ENCODE measurements at regions of chr3 and their contacts with region 1.

Region 1: DNA sequence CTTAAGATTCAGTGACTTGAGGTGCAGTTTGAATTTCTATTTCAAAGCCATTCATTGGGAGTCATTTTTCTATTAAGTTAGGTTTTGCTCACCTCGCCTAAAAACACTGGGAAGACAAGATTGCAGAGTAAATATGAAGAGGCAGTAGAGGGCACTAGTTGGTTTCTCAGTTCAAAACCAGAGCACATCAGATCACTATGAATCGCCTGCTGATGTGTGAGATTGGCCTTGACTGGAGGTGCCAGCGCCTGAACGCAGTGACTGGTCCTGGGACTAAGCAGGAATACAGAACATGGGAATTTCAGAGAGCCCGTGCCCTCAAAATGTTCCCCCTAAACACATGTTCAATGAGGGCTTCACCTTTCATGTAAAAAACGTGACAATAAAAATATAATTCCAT is 229.0 kb downstream of the ITPR1 start:
- DNase-seq: peak; percentile 23
- H3K4me3 Mint-ChIP-seq: no peak overlapping the region
- H3K27ac Mint-ChIP-seq: peak overlapping the region; percentile 63
- H3K4me1 Mint-ChIP-seq: peaks cover 53% of the 10 kb centered on the region
- H3K27me3 Mint-ChIP-seq: no peaks in the 10 kb centered on the region

Region 2: GRCh38 chr3:4334548-4334947 is 387.6 kb before region 1 on chr3:
- intact Hi-C with region 1: no loop called
- DNase-seq: no peak
- H3K4me3 Mint-ChIP-seq: no peak overlapping the region
- H3K27ac Mint-ChIP-seq: no peak overlapping the region
- H3K4me1 Mint-ChIP-seq: no peaks in the 10 kb centered on the region
- H3K27me3 Mint-ChIP-seq: peaks cover 5% of the 10 kb centered on the region

Region 3: GRCh38 chr3:4741404-4742307 is 19.6 kb after region 1 on chr3:
- intact Hi-C with region 1: loop called (anchors 2 kb)
- DNase-seq: no peak
- H3K4me3 Mint-ChIP-seq: no peak overlapping the region
- H3K27ac Mint-ChIP-seq: peak overlapping the region; percentile 87
- H3K4me1 Mint-ChIP-seq: peaks cover 67% of the 10 kb centered on the region
- H3K27me3 Mint-ChIP-seq: no peaks in the 10 kb centered on the region

Region 4: GRCh38 chr3:4770561-4770960 is 48.5 kb after region 1 on chr3:
- intact Hi-C with region 1: no loop called
- DNase-seq: no peak
- H3K4me3 Mint-ChIP-seq: no peak overlapping the region
- H3K27ac Mint-ChIP-seq: no peak overlapping the region
- H3K4me1 Mint-ChIP-seq: peaks cover 54% of the 10 kb centered on the region
- H3K27me3 Mint-ChIP-seq: no peaks in the 10 kb centered on the region

Region 5: GRCh38 chr3:4821975-4822374 is 99.9 kb after region 1 on chr3:
- intact Hi-C with region 1: loop called (anchors 2 kb)
- DNase-seq: peak; percentile 77
- H3K4me3 Mint-ChIP-seq: peak overlapping the region; percentile 20
- H3K27ac Mint-ChIP-seq: peak overlapping the region; percentile 93
- H3K4me1 Mint-ChIP-seq: peaks cover 84% of the 10 kb centered on the region
- H3K27me3 Mint-ChIP-seq: no peaks in the 10 kb centered on the region

Region 6: GRCh38 chr3:4845882-4846281 is 123.8 kb after region 1 on chr3:
- intact Hi-C with region 1: loop called (anchors 2 kb)
- DNase-seq: no peak
- H3K4me3 Mint-ChIP-seq: no peak overlapping the region
- H3K27ac Mint-ChIP-seq: peak overlapping the region; percentile 82
- H3K4me1 Mint-ChIP-seq: peaks cover 90% of the 10 kb centered on the region
- H3K27me3 Mint-ChIP-seq: no peaks in the 10 kb centered on the region